K562 (cell line): ENCODE measurements at regions of chr22 and their contacts with region 1.

Region 1: GRCh38 chr22:20663137-20663828 is 110.6 kb upstream of the SERPIND1 start:
- DNase-seq: no peak
- ATAC-seq: no peak
- H3K4me3 ChIP-seq: no peak overlapping the region
- H3K27ac ChIP-seq: no peak overlapping the region
- H3K4me1 ChIP-seq: no peaks in the 10 kb centered on the region
- H3K27me3 ChIP-seq: peaks cover 25% of the 10 kb centered on the region in 2 experiments
- CTCF ChIP-seq: no peak
- EP300 ChIP-seq: no peak
- POLR2A ChIP-seq: no peak
- RAD21 ChIP-seq: no peak

Region 2: DNA sequence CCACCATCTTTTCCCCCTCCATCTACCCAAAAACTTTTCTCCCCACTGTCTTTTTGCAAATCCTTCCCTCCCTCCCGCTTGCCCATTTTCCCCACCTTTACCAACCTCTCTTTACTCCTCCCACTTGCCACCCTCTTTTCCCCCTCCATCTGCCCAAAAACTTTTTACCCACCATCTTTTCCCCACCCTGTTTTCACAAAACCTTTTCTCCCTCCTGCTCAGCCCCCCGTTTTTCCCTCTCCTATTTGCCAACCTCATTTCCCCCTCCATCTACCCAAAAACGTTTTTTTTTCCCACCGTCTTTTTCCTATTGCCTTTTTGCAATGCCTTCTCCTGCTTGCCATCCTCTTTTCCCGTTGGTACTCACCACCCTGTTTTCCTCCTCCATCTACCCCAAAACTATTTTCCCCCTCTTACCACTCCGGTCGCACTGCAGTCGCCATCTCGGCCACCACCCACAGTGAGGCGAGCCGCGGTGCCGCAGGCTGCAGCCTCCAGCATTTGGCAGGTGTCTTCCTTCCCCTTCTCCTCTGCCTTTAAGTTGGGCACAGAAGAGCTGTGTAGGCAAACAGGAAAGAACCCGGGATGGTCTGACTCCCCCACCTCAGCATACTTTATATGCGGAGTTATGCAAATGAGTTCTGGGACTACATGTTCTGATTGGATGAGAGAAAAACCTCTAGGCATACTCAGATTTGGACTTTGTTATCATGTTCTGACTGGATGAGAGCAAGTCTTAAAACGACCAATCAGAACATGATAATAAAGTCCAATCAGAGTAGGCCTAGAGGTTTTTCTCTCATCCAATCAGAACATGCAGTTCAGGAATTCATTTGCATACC is 1460.1 kb after region 1 on chr22:
- CTCF ChIA-PET with region 1: no interaction called
- POLR2A ChIA-PET with region 1: no interaction called
- in situ Hi-C with region 1: loop called (anchors 5 kb)
- intact Hi-C with region 1: no loop called
- DNase-seq: peak in 1 of 4 experiments; percentile 38
- ATAC-seq: peak; percentile 51
- H3K4me3 ChIP-seq: no peak overlapping the region
- H3K27ac ChIP-seq: no peak overlapping the region
- H3K4me1 ChIP-seq: peaks cover 0 to 18% of the 10 kb centered on the region in 2 experiments; a peak in 1 of 5 replicates
- H3K27me3 ChIP-seq: peaks cover 35 to 36% of the 10 kb centered on the region in 2 experiments
- CTCF ChIP-seq: no peak
- EP300 ChIP-seq: no peak
- POLR2A ChIP-seq: no peak
- RAD21 ChIP-seq: no peak